Pancreas (tissue), 10 donors: ENCODE measurements at regions of chr5 and their contacts with region 1.

Region 1: GRCh38 chr5:126536874-126537273 is 58.1 kb downstream of the ALDH7A1 start:
- DNase-seq: no peak
- ATAC-seq: no peak
- H3K4me3 ChIP-seq: no peak overlapping the region
- H3K27ac ChIP-seq: no peak overlapping the region
- H3K4me1 ChIP-seq: no peaks in the 10 kb centered on the region
- H3K27me3 ChIP-seq: no peaks in the 10 kb centered on the region
- CTCF ChIP-seq: no peak

Region 2: DNA sequence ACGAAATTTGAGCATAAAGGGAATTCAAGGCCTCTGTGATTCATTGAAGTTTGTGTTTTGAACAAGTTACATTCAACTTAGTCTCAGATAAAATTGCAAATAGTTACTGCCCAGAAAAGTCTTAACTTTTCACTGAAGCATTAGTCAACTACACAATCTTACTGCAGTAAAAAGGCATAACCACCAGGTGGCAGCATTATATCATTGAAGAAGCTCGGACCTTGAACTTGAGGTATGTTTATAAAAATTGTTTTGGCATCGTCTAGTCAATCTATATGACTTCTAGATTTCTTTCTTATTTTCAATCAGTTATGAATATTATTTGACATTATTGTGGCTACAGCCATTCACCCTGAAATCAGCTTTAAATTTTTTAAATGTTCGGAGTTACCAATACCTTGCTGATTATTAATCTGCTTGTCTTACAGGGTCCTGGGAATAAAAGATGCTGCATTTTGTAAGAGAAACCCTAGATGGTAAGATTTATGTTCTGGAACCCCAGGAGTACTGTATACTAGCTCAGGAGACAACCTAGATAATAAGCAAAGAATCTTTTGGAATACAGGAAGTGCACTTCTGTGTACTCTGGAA is 197.6 kb before region 1 on chr5:
- intact Hi-C with region 1: loop called in 1 of 3 experiments (anchors 5 kb)
- DNase-seq: peak in 3 of 6 donors; percentile 31 to 51 (median 40)
- ATAC-seq: peak in 3 of 4 donors; percentile 81 to 88 (median 83)
- H3K4me3 ChIP-seq: no peak overlapping the region
- H3K27ac ChIP-seq: no peak overlapping the region
- H3K4me1 ChIP-seq: no peaks in the 10 kb centered on the region
- H3K27me3 ChIP-seq: no peaks in the 10 kb centered on the region
- CTCF ChIP-seq: peak; percentile 70 to 90 (median 82)

Region 3: DNA sequence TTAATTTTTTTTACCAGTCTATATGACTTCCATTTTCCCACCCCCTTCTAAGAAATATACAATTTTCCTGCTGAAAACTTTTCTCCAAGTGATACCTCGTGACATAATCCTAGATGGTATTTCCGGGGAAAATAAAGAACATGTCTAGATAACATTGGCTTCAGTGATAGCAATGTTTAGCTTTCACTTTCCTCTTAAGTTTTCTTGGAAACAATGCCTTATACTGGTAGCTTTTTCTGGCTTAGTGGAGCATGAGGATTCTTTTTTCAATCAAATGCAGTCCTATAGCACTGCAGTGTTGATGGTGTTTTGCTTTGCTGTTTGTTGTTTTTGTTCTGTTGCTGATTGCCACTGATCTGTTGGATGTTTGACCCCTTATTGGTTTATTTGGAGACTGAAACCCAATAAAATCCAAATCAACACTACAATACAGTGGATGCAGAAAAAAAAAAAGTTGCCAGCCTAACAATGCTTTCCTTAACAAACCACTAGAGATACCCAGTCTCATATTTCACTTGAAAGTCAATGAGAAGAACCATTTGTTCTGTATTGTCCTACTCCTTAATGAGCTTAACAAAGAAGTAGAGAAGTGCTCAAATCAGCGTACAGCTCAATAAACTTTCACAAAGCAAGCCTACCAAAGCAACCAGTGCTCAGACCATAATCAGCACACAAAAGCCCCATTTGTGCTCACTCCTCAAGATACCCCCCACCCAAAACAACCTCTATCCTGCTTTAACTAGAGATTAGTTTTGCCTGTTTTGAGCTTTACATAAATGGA is 187.8 kb before region 1 on chr5:
- intact Hi-C with region 1: loop called in 1 of 3 experiments (anchors 5 kb)
- DNase-seq: no peak
- ATAC-seq: peak in 2 of 4 donors; percentile 43 to 74
- H3K4me3 ChIP-seq: no peak overlapping the region
- H3K27ac ChIP-seq: no peak overlapping the region
- H3K4me1 ChIP-seq: no peaks in the 10 kb centered on the region
- H3K27me3 ChIP-seq: no peaks in the 10 kb centered on the region
- CTCF ChIP-seq: no peak

Region 4: GRCh38 chr5:126718246-126718868 is 181.5 kb after region 1 on chr5:
- intact Hi-C with region 1: no loop called
- DNase-seq: no peak
- ATAC-seq: no peak
- H3K4me3 ChIP-seq: no peak overlapping the region
- H3K27ac ChIP-seq: no peak overlapping the region
- H3K4me1 ChIP-seq: no peaks in the 10 kb centered on the region
- H3K27me3 ChIP-seq: no peaks in the 10 kb centered on the region
- CTCF ChIP-seq: no peak